ENCODE measurements at regions of chr18 and their contacts with region 1.

Region 1: GRCh38 chr18:59459369-59460079 is 100.5 kb upstream of the LMAN1 start:
- DNase-seq: peak; percentile 75
- ATAC-seq: peak; percentile 86
- H3K4me3 ChIP-seq: no peak overlapping the region
- H3K27ac ChIP-seq: peak overlapping the region; percentile 36; the same call in 1 of the 2 replicates
- H3K4me1 ChIP-seq: peaks cover 5% of the 10 kb centered on the region
- H3K27me3 ChIP-seq: no peaks in the 10 kb centered on the region
- CTCF ChIP-seq: peak; percentile 77
- POLR2A ChIP-seq: no peak
- RAD21 ChIP-seq: peak; percentile 82

Region 2: GRCh38 chr18:59143441-59143840 is 316.1 kb before region 1 on chr18:
- CTCF ChIA-PET with region 1: no interaction called
- POLR2A ChIA-PET with region 1: no interaction called
- dilution Hi-C with region 1: no loop called
- in situ Hi-C with region 1: no loop called
- intact Hi-C with region 1: no loop called
- DNase-seq: peak; percentile 41
- ATAC-seq: no peak
- H3K4me3 ChIP-seq: no peak overlapping the region
- H3K27ac ChIP-seq: no peak overlapping the region
- H3K4me1 ChIP-seq: no peaks in the 10 kb centered on the region
- H3K27me3 ChIP-seq: no peaks in the 10 kb centered on the region
- CTCF ChIP-seq: no peak
- POLR2A ChIP-seq: no peak
- RAD21 ChIP-seq: no peak

Region 3: GRCh38 chr18:59402432-59403090 is 57.0 kb before region 1 on chr18:
- CTCF ChIA-PET with region 1: no interaction called
- POLR2A ChIA-PET with region 1: no interaction called
- dilution Hi-C with region 1: no loop called
- in situ Hi-C with region 1: no loop called
- intact Hi-C with region 1: no loop called
- DNase-seq: peak; percentile 68
- ATAC-seq: peak; percentile 100
- H3K4me3 ChIP-seq: no peak overlapping the region
- H3K27ac ChIP-seq: no peak overlapping the region
- H3K4me1 ChIP-seq: no peaks in the 10 kb centered on the region
- H3K27me3 ChIP-seq: no peaks in the 10 kb centered on the region
- CTCF ChIP-seq: peak; percentile 91
- POLR2A ChIP-seq: no peak
- RAD21 ChIP-seq: peak; percentile 96

Region 4: DNA sequence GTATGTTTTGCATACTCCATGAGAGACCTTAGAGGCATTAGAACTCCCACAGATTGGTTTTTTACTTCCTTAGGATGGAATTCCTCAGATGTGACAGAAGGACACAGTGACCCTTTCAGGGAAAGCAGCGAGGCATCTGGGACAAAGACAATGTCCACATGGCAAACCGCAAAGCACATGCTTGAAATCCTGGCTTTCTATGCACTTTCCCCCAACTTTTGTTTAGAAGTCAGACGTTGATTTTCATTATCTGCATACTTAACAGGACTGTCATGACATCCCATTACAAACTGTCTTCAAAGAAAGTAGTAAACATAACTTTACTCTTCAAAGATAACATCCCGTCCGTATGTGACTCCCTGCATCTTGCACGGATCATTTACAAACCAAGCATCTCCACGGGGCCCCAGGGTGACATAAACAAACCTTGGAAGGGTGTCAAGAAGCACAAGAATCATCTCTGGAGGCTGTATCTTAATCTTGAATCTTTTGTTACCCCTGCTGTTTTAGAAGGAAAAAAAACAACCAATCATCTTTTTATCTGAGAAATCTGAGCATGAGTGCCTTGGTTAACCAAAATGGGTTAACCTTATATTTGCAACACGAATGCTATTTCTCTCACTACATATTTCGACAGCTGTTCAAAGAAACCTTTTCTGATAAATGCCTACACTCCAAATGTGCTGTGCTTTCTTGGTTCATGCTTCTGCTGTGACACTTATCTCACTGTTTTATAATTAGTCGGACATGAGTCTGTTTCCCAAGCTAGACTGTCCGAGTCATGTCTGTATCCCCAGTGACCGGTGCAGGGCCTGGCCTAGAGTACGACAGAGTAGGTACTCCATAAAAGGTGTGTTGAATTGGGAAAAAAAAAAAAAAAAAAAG is 146.9 kb after region 1 on chr18:
- CTCF ChIA-PET with region 1: interaction called, 3 read pairs
- POLR2A ChIA-PET with region 1: no interaction called
- dilution Hi-C with region 1: no loop called
- in situ Hi-C with region 1: no loop called
- intact Hi-C with region 1: loop called (anchors 5 kb)
- DNase-seq: peak; percentile 89
- ATAC-seq: peak; percentile 81
- H3K4me3 ChIP-seq: no peak overlapping the region
- H3K27ac ChIP-seq: peak overlapping the region; percentile 94; the same call in 1 of the 2 replicates
- H3K4me1 ChIP-seq: peaks cover 23% of the 10 kb centered on the region
- H3K27me3 ChIP-seq: no peaks in the 10 kb centered on the region
- CTCF ChIP-seq: no peak
- POLR2A ChIP-seq: no peak
- RAD21 ChIP-seq: no peak

Region 5: GRCh38 chr18:59631583-59632181 is 172.2 kb after region 1 on chr18:
- CTCF ChIA-PET with region 1: interaction called, 8 read pairs
- POLR2A ChIA-PET with region 1: no interaction called
- dilution Hi-C with region 1: no loop called
- in situ Hi-C with region 1: loop called (anchors 25 kb)
- intact Hi-C with region 1: loop called (anchors 1 kb)
- DNase-seq: peak; percentile 58
- ATAC-seq: peak; percentile 73
- H3K4me3 ChIP-seq: no peak overlapping the region
- H3K27ac ChIP-seq: no peak overlapping the region
- H3K4me1 ChIP-seq: peaks cover 9% of the 10 kb centered on the region
- H3K27me3 ChIP-seq: no peaks in the 10 kb centered on the region
- CTCF ChIP-seq: peak; percentile 78
- POLR2A ChIP-seq: no peak
- RAD21 ChIP-seq: peak; percentile 89

Region 6: GRCh38 chr18:59783138-59783537 is 323.6 kb after region 1 on chr18:
- CTCF ChIA-PET with region 1: no interaction called
- POLR2A ChIA-PET with region 1: no interaction called
- dilution Hi-C with region 1: no loop called
- in situ Hi-C with region 1: no loop called
- intact Hi-C with region 1: loop called (anchors 2 kb)
- DNase-seq: peak; percentile 74
- ATAC-seq: peak; percentile 71
- H3K4me3 ChIP-seq: no peak overlapping the region
- H3K27ac ChIP-seq: no peak overlapping the region
- H3K4me1 ChIP-seq: peaks cover 9% of the 10 kb centered on the region
- H3K27me3 ChIP-seq: no peaks in the 10 kb centered on the region
- CTCF ChIP-seq: peak; percentile 62
- POLR2A ChIP-seq: no peak
- RAD21 ChIP-seq: peak; percentile 63

Measured in IMR-90 (cell line).